Activated CD8-positive, alpha-beta T cell treated with anti-CD3 and anti-CD28 coated beads for 36 hours (primary cell): ENCODE measurements at regions of chr17 and their contacts with region 1.

Region 1: DNA sequence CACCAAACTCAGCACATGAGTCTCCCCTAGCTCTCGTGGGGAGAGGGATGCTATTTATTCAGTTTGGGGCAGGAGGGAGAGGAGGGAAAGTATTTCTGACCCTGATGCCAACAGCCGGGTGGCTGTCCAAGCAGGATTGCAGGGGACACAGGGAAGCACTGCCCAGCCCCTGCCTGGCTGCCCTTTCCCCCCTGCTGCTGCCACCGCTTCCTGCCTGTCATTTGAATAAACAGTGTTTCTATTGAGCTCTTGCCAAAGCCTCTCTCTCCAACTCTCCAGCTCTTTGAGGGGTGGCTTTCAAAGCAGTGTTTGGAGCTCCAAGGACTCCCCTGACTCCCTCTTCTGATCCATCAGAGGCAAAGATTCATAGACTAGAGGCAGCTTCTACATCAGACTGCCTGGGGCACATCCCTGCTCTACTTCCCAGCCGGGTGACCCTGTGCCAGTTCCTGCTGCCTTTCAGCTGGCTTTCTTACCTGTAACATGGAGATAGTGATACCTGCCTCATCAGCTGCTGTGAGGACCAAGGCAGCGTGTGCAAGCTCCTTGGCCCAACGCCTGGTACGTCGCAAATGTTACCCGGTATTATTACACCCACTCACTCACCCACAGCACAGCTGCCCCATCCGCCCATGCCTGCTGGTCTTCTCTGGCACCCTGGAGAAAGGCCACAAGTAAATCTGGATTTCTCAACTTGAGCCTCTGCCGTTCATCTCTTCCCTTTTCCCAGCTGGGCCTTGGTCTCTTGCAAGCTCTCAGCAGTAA is 9.5 kb downstream of the PROCA1 start:
- DNase-seq: no peak
- ATAC-seq: no peak
- H3K4me3 Mint-ChIP-seq: no peak overlapping the region
- H3K27ac Mint-ChIP-seq: peak overlapping the region; percentile 5
- H3K4me1 Mint-ChIP-seq: no peaks in the 10 kb centered on the region
- H3K27me3 Mint-ChIP-seq: no peaks in the 10 kb centered on the region
- CTCF ChIP-seq: no peak

Region 2: GRCh38 chr17:28667870-28668269 is 34.3 kb before region 1 on chr17:
- CTCF ChIA-PET with region 1: no interaction called
- POLR2A ChIA-PET with region 1: no interaction called
- intact Hi-C with region 1: no loop called
- DNase-seq: no peak
- ATAC-seq: no peak
- H3K4me3 Mint-ChIP-seq: no peak overlapping the region
- H3K27ac Mint-ChIP-seq: no peak overlapping the region
- H3K4me1 Mint-ChIP-seq: peaks cover 35% of the 10 kb centered on the region
- H3K27me3 Mint-ChIP-seq: no peaks in the 10 kb centered on the region
- CTCF ChIP-seq: no peak

Region 3: DNA sequence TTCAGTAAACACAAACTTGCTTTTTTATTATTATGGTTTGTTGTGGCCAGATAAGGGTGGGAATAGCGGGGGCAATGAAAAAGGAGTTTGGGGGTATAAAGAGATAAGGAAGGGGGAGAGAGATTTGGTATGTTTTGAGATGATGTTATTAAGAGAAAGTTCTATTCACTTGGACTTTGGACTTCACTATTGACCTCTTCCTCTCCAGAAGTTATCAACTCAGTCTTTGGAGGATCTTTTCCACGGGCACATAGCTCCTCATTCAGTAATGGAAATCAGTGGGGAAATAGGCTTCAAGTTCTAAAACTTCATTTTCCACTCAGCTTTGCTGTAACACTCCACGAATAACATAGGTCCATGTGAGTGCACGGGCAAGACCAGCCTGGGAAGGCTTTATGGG is 13.7 kb before region 1 on chr17:
- CTCF ChIA-PET with region 1: no interaction called
- POLR2A ChIA-PET with region 1: interaction called, 14 read pairs
- intact Hi-C with region 1: no loop called
- DNase-seq: no peak
- ATAC-seq: no peak
- H3K4me3 Mint-ChIP-seq: no peak overlapping the region
- H3K27ac Mint-ChIP-seq: no peak overlapping the region
- H3K4me1 Mint-ChIP-seq: no peaks in the 10 kb centered on the region
- H3K27me3 Mint-ChIP-seq: no peaks in the 10 kb centered on the region
- CTCF ChIP-seq: no peak